T-cell (primary cell): ENCODE measurements at regions of chr2 and their contacts with region 1.

Region 1: GRCh38 chr2:135052997-135053474 is 944 bp downstream of the RAB3GAP1 start:
- DNase-seq: peak in 20 of 35 experiments; percentile 1 to 48 (median 10)
- ATAC-seq: peak; percentile 4 to 11 (median 6)
- H3K4me3 ChIP-seq: peak overlapping the region; percentile 64 to 92
- H3K4me3 Mint-ChIP-seq: peak overlapping the region; percentile 94 to 99 (median 97)
- H3K27ac ChIP-seq: peak overlapping the region; percentile 93
- H3K27ac Mint-ChIP-seq: peak overlapping the region; percentile 99 to 100
- H3K4me1 ChIP-seq: peaks cover 10 to 30% of the 10 kb centered on the region in 2 experiments
- H3K4me1 Mint-ChIP-seq: peaks cover 44 to 52% (median 50%) of the 10 kb centered on the region in 3 donors
- H3K27me3 ChIP-seq: no peaks in the 10 kb centered on the region
- H3K27me3 Mint-ChIP-seq: no peaks in the 10 kb centered on the region

Region 2: DNA sequence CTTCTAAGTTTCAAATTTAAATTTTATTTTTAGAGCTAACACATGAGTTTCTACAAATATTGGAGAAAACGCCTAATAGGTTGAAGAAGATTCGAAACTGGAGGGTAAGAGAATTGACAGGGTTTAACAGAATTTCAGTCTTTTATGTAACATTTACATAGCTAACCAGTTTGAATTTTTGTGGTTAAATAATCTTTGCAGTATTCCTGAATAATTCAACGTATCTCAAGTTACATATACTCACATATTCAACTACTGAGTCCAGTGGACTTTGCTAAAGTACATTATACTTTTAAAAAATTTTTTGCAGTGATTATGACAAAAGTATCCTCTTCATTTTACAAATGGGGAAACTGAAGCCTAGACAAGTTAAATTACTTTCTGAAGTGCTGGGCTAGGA is 100.4 kb before region 1 on chr2:
- CTCF ChIA-PET with region 1: no interaction called
- POLR2A ChIA-PET with region 1: no interaction called
- DNase-seq: no peak
- ATAC-seq: no peak
- H3K4me3 ChIP-seq: no peak overlapping the region
- H3K4me3 Mint-ChIP-seq: no peak overlapping the region
- H3K27ac ChIP-seq: no peak overlapping the region
- H3K27ac Mint-ChIP-seq: no peak overlapping the region
- H3K4me1 ChIP-seq: peaks cover 3% of the 10 kb centered on the region in 2 experiments
- H3K4me1 Mint-ChIP-seq: peaks cover 22 to 26% (median 23%) of the 10 kb centered on the region in 3 donors
- H3K27me3 ChIP-seq: no peaks in the 10 kb centered on the region
- H3K27me3 Mint-ChIP-seq: no peaks in the 10 kb centered on the region

Region 3: DNA sequence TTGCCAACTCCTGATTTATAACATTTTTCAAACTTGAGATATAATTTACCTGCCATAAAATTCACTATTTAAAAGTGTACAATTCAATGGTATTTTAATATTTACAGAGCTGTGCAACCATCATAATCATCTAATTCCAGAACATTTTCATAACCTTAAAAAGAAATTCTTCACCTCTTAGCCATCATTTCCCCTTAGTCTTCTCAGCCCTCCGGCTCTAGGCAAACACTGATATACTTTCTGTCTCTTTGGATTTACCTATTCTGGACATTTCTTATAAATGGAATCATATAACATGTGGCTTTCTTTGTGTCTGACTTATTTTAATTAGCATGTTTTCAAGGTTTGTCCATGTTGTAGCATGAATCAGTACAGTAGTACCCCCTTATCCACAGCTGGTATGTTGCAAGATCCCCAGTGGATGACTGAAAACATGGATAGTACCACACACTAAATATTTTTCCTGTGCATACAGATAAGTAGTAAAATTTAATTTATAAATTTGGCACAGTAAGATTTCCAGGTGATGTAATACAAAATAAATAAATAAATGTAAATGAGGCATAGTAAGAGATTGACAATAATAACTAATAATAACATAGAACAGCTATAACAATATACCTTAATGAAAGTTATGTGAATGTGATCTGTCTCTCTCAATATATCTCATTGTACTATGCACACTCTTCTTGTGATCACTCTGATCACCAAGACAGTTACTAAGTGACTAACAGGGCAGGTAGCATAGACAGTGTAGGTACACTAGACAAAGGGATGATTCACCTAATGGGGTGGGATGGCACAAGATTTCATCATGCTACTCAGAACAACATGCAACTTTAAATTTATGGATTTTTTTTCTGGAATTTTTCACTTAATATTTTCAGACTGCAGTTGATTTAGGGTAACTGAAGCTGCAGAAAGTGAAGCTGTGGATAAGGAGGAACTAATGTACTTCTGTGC is 72.2 kb after region 1 on chr2:
- CTCF ChIA-PET with region 1: no interaction called
- POLR2A ChIA-PET with region 1: no interaction called
- DNase-seq: no peak
- ATAC-seq: no peak
- H3K4me3 ChIP-seq: no peak overlapping the region
- H3K4me3 Mint-ChIP-seq: no peak overlapping the region
- H3K27ac ChIP-seq: no peak overlapping the region
- H3K27ac Mint-ChIP-seq: no peak overlapping the region
- H3K4me1 ChIP-seq: no peaks in the 10 kb centered on the region
- H3K4me1 Mint-ChIP-seq: no peaks in the 10 kb centered on the region
- H3K27me3 ChIP-seq: no peaks in the 10 kb centered on the region
- H3K27me3 Mint-ChIP-seq: no peaks in the 10 kb centered on the region

Region 4: DNA sequence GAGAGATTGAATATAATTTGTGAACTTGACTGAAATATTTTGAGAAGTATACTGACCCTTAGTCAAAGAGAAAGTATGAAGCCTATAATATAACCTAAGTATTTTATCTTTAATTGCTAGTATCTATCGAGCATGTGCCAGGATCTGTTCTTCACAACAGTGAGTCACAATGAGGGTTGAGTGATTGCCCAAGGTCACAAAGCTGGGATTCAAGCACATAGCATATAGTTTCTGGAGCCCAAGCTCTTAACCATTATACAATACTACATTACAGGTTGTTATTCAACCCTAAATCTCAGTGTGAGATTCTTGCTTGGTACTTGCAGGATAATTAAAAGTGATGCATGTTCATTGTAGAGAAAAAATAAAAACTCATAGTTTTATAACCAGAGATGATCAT is 96.2 kb after region 1 on chr2:
- CTCF ChIA-PET with region 1: interaction called in 1 of 2 experiments, 12 read pairs
- POLR2A ChIA-PET with region 1: no interaction called
- DNase-seq: no peak
- ATAC-seq: no peak
- H3K4me3 ChIP-seq: no peak overlapping the region
- H3K4me3 Mint-ChIP-seq: no peak overlapping the region
- H3K27ac ChIP-seq: no peak overlapping the region
- H3K27ac Mint-ChIP-seq: no peak overlapping the region
- H3K4me1 ChIP-seq: no peaks in the 10 kb centered on the region
- H3K4me1 Mint-ChIP-seq: peaks cover 9 to 14% (median 13%) of the 10 kb centered on the region in 3 donors
- H3K27me3 ChIP-seq: no peaks in the 10 kb centered on the region
- H3K27me3 Mint-ChIP-seq: no peaks in the 10 kb centered on the region

Region 5: GRCh38 chr2:136008205-136008865 is 955.3 kb after region 1 on chr2:
- CTCF ChIA-PET with region 1: no interaction called
- POLR2A ChIA-PET with region 1: interaction called in 1 of 2 experiments, 11 read pairs
- DNase-seq: peak in 34 of 35 experiments; percentile 42 to 83 (median 61)
- ATAC-seq: peak; percentile 90 to 97 (median 94)
- H3K4me3 ChIP-seq: no peak overlapping the region
- H3K4me3 Mint-ChIP-seq: peak overlapping the region in 2 of 3 donors; percentile 18 to 35
- H3K27ac ChIP-seq: peak overlapping the region; percentile 79
- H3K27ac Mint-ChIP-seq: peak overlapping the region; percentile 79 to 87
- H3K4me1 ChIP-seq: peaks cover 4 to 21% of the 10 kb centered on the region in 2 experiments
- H3K4me1 Mint-ChIP-seq: peaks cover 31 to 52% (median 35%) of the 10 kb centered on the region in 3 donors
- H3K27me3 ChIP-seq: no peaks in the 10 kb centered on the region
- H3K27me3 Mint-ChIP-seq: no peaks in the 10 kb centered on the region